Gastrocnemius medialis (tissue), 4 donors: ENCODE measurements at regions of chr17 and their contacts with region 1.

Region 1: DNA sequence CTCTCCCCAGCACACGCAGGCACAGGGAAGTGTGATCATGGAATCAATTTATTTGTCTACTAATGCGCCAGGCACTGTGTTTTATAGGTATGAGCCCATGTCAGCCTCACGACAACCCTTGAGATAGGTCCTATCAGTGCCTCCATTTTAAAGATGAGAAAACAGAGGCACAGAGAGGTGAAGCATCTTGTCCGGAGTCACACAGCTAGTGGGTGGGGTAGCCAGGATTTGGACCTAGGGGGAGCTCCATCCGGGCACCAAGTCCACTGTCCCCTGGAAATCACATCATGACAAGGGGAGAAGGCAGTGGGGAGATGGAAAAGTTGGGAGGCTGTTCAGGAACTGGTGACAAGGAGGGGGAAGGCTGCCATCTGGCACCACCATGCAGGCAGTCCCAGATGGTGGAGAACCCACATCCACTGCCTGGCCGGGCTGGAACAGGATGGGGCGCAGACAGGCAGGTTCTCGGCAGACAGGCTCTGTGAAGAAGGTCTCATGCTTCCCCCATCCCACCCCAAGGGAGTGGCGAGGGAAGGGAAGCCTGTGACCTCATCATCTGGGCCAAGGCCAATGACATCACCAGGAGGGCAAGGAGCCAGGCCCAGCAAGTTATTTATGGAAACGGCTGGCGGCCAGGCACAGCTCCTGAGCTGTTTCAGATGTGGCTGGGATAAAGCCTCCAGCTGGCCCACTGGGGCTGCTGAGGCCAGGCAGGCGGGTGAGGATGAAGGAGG is 126.0 kb upstream of the SDK2 start:
- DNase-seq: peak; percentile 27 to 58
- ATAC-seq: peak; percentile 78 to 80
- H3K4me3 ChIP-seq: no peak overlapping the region
- H3K27ac ChIP-seq: no peak overlapping the region
- H3K4me1 ChIP-seq: peaks cover 9 to 10% of the 10 kb centered on the region in 2 donors
- H3K27me3 ChIP-seq: no peaks in the 10 kb centered on the region
- CTCF ChIP-seq: no peak
- POLR2A ChIP-seq: no peak

Region 2: DNA sequence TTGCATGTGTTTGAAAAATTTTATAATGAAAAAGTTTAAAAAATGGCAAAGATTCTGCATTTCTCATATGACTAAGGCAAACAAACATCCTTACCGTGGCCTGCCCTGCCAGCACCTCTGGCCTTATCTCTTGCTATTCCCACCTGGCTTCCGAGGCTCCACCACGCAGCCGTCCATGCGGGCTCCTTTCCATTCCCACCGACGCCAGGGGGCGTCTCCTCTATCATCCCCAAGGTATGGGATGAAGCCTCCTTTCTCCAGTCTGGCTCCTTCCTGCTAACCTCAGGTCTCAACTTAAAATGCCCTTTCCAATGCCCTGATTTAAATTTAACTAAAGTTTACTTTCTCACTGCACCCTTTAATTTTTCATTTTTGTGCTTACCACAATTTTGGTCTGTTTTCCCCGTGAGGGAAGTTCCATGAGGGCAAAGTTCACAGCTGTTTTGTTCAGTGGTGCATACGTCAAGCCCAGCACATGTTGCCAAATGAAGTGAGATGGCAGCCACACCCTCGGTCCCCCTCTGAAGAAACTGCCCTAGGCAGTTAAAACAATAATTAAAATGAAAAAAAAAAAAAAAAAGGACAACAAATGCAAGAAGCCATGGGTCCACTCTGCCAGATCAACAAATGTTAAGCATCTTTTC is 112.7 kb before region 1 on chr17:
- in situ Hi-C with region 1: loop called in 1 of 4 experiments (anchors 25 kb)
- intact Hi-C with region 1: no loop called
- DNase-seq: no peak
- ATAC-seq: no peak
- H3K4me3 ChIP-seq: no peak overlapping the region
- H3K27ac ChIP-seq: no peak overlapping the region
- H3K4me1 ChIP-seq: no peaks in the 10 kb centered on the region
- H3K27me3 ChIP-seq: no peaks in the 10 kb centered on the region
- CTCF ChIP-seq: peak in 2 of 5 experiments; percentile 8 to 41
- POLR2A ChIP-seq: no peak

Region 3: DNA sequence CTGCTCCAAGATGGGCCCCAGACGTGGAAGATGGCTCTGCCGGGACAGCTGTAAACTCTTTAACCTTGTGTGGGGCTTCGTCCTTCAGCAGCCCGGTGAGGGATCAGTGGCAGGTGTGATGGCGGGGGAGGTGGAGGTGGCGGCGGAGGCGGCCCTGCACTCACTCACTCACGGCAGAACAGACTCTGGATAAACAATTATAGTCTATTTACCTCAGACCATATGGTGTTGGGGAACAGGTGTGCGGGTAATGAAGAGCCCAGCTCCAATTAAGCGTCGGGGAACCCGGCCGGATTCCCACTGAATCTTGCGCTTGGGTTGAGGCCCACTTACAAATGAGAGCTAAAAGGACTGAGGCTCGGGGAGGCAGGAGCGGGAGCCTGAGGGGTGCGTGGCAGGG is 21.8 kb before region 1 on chr17:
- in situ Hi-C with region 1: no loop called
- intact Hi-C with region 1: no loop called
- DNase-seq: no peak
- ATAC-seq: no peak
- H3K4me3 ChIP-seq: no peak overlapping the region
- H3K27ac ChIP-seq: no peak overlapping the region
- H3K4me1 ChIP-seq: no peaks in the 10 kb centered on the region
- H3K27me3 ChIP-seq: peaks cover 0 to 6% (median 0%) of the 10 kb centered on the region in 3 donors
- CTCF ChIP-seq: no peak
- POLR2A ChIP-seq: no peak